Mammary epithelial cell (primary cell): ENCODE measurements at regions of chr19 and their contacts with region 1.

Region 1: DNA sequence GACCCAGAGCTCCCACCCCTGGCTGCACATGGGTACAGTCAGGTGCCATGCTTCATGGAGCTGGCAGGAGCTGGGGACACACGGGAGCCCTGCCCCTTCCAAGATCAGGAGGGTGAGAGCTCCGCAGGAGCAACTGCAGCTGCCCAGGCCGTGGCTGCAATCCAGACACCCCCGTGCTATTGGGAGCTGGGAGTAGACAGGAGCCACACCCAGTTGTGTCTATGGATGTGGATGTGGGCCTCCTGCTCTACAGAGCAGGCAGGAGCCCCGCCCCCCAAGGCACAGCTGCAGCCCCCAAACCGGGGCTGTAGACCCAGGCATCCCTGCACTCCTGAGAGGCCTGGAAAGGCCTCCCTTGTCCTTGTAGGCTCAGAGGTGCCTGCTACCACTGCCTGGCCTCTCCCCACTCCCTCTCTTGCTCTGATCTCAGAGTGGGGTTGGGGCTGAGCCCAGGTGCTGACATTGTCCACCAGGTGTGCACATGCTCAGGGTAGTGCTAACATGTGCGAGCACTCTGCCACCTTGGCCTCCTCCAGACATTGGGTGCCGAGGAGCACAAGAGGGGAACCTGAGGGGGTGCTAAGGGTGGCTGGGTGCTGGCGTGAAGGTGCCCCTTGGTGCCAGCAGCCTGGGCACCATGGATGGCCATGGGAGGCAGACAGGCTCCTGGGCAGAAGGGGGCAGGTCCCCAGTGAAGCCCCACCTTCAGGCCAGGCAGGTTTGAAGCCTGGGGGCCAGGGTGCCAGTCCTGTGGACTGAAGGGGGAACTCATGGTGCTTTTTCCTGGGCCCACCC is 8.0 kb upstream of the BAX start:
- DNase-seq: no peak
- H3K4me3 ChIP-seq: no peak overlapping the region
- H3K27ac ChIP-seq: no peak overlapping the region
- H3K4me1 ChIP-seq: no peaks in the 10 kb centered on the region
- H3K27me3 ChIP-seq: no peaks in the 10 kb centered on the region
- CTCF ChIP-seq: no peak

Region 2: DNA sequence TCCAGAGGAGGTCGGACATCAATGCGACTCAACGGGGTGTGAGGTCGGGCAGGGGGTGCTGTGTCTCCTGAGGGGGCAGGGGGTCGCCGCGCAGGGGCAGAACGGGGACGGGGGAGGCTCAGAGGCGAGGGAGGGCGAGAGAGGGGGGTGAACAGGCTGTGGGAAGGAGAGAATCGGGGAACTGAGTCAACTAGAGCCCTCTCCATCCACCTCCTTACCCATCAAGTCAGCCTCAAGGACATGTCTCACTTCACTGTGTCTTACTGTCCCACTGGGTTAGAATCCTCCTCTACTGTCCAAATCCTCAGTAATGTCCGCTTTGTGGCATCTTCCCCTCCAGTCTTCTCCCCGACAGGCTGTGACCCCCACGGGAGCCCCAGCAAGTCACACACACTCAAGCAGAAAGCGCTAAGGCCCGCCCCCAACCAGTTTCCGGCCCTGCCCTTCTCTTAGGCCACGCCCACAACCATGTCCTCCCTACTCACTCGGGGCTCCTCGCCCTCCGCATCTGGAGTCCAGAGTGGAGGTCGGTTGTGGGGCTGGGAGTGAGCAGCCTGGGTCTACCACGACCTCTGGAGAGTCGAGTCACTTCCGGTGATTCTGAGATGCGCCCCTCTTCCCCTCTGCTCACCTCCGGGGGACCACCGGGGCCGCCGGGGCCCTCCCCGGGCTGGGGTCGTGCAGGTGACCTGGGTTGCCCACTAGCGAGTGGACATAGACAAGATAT is 87.5 kb before region 1 on chr19:
- CTCF ChIA-PET with region 1: no interaction called
- dilution Hi-C with region 1: no loop called
- in situ Hi-C with region 1: no loop called
- intact Hi-C with region 1: no loop called
- DNase-seq: no peak
- H3K4me3 ChIP-seq: no peak overlapping the region
- H3K27ac ChIP-seq: no peak overlapping the region
- H3K4me1 ChIP-seq: no peaks in the 10 kb centered on the region
- H3K27me3 ChIP-seq: no peaks in the 10 kb centered on the region
- CTCF ChIP-seq: no peak

Region 3: GRCh38 chr19:48887861-48888612 is 58.6 kb before region 1 on chr19:
- CTCF ChIA-PET with region 1: no interaction called
- dilution Hi-C with region 1: loop called (anchors 5 kb)
- in situ Hi-C with region 1: loop called in 1 of 2 experiments (anchors 10 kb)
- intact Hi-C with region 1: no loop called
- DNase-seq: no peak
- H3K4me3 ChIP-seq: no peak overlapping the region
- H3K27ac ChIP-seq: no peak overlapping the region
- H3K4me1 ChIP-seq: no peaks in the 10 kb centered on the region
- H3K27me3 ChIP-seq: no peaks in the 10 kb centered on the region
- CTCF ChIP-seq: no peak

Region 4: GRCh38 chr19:48913114-48913889 is 33.4 kb before region 1 on chr19:
- CTCF ChIA-PET with region 1: no interaction called
- dilution Hi-C with region 1: loop called (anchors 5 kb)
- in situ Hi-C with region 1: no loop called
- intact Hi-C with region 1: no loop called
- DNase-seq: no peak
- H3K4me3 ChIP-seq: no peak overlapping the region
- H3K27ac ChIP-seq: no peak overlapping the region
- H3K4me1 ChIP-seq: no peaks in the 10 kb centered on the region
- H3K27me3 ChIP-seq: no peaks in the 10 kb centered on the region
- CTCF ChIP-seq: no peak

Region 5: GRCh38 chr19:49327878-49328544 is 381.4 kb after region 1 on chr19:
- CTCF ChIA-PET with region 1: no interaction called
- dilution Hi-C with region 1: no loop called
- in situ Hi-C with region 1: no loop called
- intact Hi-C with region 1: no loop called
- DNase-seq: no peak
- H3K4me3 ChIP-seq: no peak overlapping the region
- H3K27ac ChIP-seq: no peak overlapping the region
- H3K4me1 ChIP-seq: no peaks in the 10 kb centered on the region
- H3K27me3 ChIP-seq: no peaks in the 10 kb centered on the region
- CTCF ChIP-seq: peak; percentile 76 to 86